ENCODE measurements at regions of chr5 and their contacts with region 1.

Region 1: DNA sequence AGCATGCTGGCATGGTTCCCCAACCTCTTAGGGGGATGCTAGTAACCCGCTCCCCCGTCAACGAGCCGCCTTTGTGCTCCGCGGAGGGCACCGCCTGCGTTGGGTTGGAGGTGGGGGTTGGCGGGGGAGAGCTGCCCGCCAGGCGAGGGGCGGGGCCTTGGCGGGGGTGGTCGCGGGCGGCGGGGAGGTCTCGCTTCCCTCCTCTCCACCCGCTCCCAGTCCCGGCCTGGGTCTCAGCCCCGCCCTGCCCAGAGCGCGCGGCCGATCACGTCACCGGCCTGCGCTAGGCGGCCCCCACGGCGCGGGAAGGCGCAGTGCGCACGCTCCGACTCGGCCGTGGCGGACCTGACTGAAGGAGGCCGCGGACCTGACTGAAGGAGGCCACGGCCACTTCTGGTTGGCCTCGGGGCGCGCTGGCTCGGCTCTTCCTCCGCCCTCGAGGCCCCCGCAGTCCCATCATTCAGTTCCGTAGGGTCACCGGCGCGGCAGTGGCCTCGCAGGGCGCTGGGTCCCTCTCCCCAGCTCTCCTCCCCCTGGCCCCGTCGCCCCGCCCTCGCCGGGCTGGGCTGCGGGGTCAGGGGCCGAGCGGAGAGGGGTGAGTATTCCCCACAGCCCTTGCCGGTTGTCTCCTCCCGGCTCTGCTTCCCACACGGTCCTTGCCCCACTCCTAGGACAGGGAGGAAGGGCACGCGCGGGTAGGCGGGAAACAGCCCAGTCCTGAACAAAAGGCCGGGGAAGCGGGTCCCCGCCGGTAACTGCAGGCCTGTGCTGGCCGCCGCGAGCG is at the start of gene ATG10:
- DNase-seq: peak; percentile 79 to 87
- ATAC-seq: peak; percentile 94 to 96
- H3K4me3 ChIP-seq: peak within 1 kb of the TSS; percentile 79 to 93 (median 82)
- H3K27ac ChIP-seq: peak within 1 kb of the TSS; percentile 93 to 99 (median 98)
- H3K4me1 ChIP-seq: peaks cover 0 to 8% of the 10 kb centered on the region in 2 donors
- H3K27me3 ChIP-seq: no peaks in the 10 kb centered on the region
- CTCF ChIP-seq: peak in 1 of 5 experiments; percentile 9
- POLR2A ChIP-seq: peak; percentile 95 to 97
- total RNA-seq, gene ATG10: 2.9 to 8.5 (median 6.0) TPM

Region 2: DNA sequence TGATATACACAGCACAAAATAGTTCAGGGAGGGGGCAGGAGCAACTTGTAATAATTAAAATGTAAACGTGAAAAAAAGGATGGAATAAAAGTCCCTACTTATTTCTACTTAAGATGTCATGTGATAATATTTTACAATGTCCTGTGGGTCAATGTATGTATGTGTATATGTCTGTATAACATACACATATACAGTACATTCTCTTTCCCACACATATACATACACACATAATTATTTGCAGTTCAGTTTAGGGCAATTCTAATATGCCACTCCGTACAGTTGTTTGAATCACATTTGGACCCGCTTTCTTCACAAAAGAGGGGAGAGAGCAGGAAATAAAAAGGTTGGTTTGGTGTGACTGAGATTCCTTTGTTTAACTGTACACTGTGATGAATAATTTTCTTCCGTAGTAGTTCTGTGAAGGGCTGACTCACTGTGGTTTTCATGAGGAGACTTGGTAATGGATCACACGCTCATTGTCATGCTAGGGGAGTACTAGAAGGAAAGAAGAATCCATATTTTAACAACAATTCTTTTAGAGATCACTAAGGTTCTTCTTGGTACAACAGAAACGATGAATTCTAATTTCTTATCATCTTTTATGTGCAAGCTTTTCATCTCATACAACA is 551.8 kb before region 1 on chr5:
- in situ Hi-C with region 1: no loop called
- intact Hi-C with region 1: loop called (anchors 5 kb)
- DNase-seq: no peak
- ATAC-seq: no peak
- H3K4me3 ChIP-seq: no peak overlapping the region
- H3K27ac ChIP-seq: no peak overlapping the region
- H3K4me1 ChIP-seq: peaks cover 8 to 25% of the 10 kb centered on the region in 2 donors
- H3K27me3 ChIP-seq: no peaks in the 10 kb centered on the region
- CTCF ChIP-seq: no peak
- POLR2A ChIP-seq: no peak

Region 3: DNA sequence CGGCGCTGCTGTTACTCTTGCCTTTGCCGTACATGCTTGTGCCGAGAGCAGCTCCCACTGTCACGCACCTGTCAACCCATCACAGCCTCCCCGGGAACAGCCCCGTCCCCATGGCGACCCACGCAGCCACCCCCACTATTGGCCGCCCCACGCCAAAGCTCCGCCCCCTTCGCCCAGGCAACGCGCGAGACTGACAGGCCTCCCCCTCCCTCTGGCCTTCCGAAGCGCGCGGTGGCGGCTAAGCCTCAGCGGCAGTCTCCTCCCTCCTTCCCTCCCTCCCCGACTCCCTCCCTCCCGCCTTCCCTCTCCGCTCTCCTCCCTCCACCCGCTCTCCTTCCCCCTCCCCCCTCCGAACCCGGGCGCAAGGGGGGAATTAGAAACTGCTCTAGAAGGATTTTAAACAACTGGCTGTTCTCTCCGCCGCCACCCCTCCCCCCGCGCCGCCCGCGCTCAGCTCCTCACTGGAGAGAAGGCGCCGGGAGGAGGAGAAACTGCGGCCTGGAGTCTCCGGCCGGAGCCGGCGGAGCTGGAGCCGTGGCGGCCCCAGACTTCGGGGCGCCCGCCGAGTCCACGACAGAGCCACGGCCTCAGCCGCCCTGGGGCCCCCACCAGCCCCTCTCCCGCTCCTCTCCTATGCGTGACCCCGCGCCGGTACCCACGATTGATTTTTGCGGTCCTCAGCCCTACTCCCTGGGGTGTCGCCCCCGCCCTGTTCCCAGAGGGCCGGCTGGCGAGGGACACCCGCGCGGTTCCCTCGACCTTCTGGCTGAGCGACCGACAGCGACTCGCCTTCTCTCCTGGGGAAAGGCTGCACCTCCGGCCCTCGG is 220.7 kb before region 1 on chr5 and contains the start of gene SSBP2:
- in situ Hi-C with region 1: loop called in 3 of 4 experiments (anchors 5 to 25 kb)
- intact Hi-C with region 1: loop called (anchors 5 kb)
- DNase-seq: peak; percentile 98 to 100
- ATAC-seq: peak; percentile 76 to 81
- H3K4me3 ChIP-seq: peak within 1 kb of the TSS; percentile 81 to 84 (median 82)
- H3K27ac ChIP-seq: peak within 1 kb of the TSS; percentile 86 to 99 (median 98)
- H3K4me1 ChIP-seq: peaks cover 41 to 59% of the 10 kb centered on the region in 2 donors
- H3K27me3 ChIP-seq: no peaks in the 10 kb centered on the region
- CTCF ChIP-seq: peak in 1 of 5 experiments; percentile 30
- POLR2A ChIP-seq: peak; percentile 68 to 84
- total RNA-seq, gene SSBP2: 30.4 to 66.5 (median 40.5) TPM

Region 4: DNA sequence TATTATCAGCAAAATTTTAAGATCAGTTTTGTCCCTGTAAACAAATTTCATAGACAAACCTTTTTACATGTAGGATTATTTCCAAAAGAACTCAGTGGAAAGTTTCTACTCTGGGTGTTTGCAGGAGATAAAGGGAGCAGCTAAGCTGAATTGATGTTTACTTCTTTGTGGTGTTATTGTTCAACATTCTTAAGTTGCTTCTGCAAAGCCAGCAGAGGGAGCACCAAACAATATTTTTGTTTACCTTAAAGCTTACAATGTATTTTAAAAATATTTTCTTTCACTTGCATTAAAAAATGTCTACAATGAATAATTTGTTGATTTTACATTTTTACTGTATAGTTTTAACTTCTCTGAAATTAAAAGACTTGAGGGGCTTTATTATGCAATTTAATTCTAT is 135.4 kb after region 1 on chr5:
- in situ Hi-C with region 1: no loop called
- intact Hi-C with region 1: loop called (anchors 5 kb)
- DNase-seq: no peak
- ATAC-seq: peak; percentile 74 to 79
- H3K4me3 ChIP-seq: no peak overlapping the region
- H3K27ac ChIP-seq: no peak overlapping the region
- H3K4me1 ChIP-seq: peaks cover 7 to 18% of the 10 kb centered on the region in 2 donors
- H3K27me3 ChIP-seq: no peaks in the 10 kb centered on the region
- CTCF ChIP-seq: peak; percentile 38 to 56 (median 54)
- POLR2A ChIP-seq: no peak

Region 5: GRCh38 chr5:83076742-83077661 is 1105.1 kb after region 1 on chr5 and contains the starts of genes TMEM167A and XRCC4:
- in situ Hi-C with region 1: no loop called
- intact Hi-C with region 1: loop called (anchors 10 kb)
- DNase-seq: peak; percentile 97
- ATAC-seq: peak; percentile 99 to 100
- H3K4me3 ChIP-seq: peak within 1 kb of the TSS; percentile 74 to 97 (median 88)
- H3K27ac ChIP-seq: peak within 1 kb of the TSS; percentile 87 to 93 (median 92)
- H3K4me1 ChIP-seq: peaks cover 29 to 36% of the 10 kb centered on the region in 2 donors
- H3K27me3 ChIP-seq: no peaks in the 10 kb centered on the region
- CTCF ChIP-seq: no peak
- POLR2A ChIP-seq: peak; percentile 76 to 86
- total RNA-seq, gene TMEM167A: 16.5 to 24.6 (median 20.0) TPM
- total RNA-seq, gene XRCC4: 1.8 to 3.5 (median 2.6) TPM

Measured in gastrocnemius medialis (tissue), 4 donors.